ENCODE measurements at regions of chr14 and their contacts with region 1.

Region 1: GRCh38 chr14:100375963-100376735 is 53.0 kb downstream of the SLC25A47 start:
- DNase-seq: peak; percentile 93
- ATAC-seq: peak; percentile 81
- H3K4me3 Mint-ChIP-seq: peak within 1 kb of the TSS; percentile 95
- H3K27ac Mint-ChIP-seq: peak within 1 kb of the TSS; percentile 95
- H3K4me1 Mint-ChIP-seq: peaks cover 48% of the 10 kb centered on the region
- H3K27me3 Mint-ChIP-seq: no peaks in the 10 kb centered on the region
- CTCF ChIP-seq: no peak

Region 2: GRCh38 chr14:99604283-99604765 is 771.8 kb before region 1 on chr14:
- CTCF ChIA-PET with region 1: no interaction called
- POLR2A ChIA-PET with region 1: no interaction called
- intact Hi-C with region 1: loop called (anchors 10 kb)
- DNase-seq: peak; percentile 96
- ATAC-seq: peak; percentile 94
- H3K4me3 Mint-ChIP-seq: peak overlapping the region; percentile 88
- H3K27ac Mint-ChIP-seq: peak overlapping the region; percentile 71
- H3K4me1 Mint-ChIP-seq: peaks cover 9% of the 10 kb centered on the region
- H3K27me3 Mint-ChIP-seq: no peaks in the 10 kb centered on the region
- CTCF ChIP-seq: no peak

Region 3: DNA sequence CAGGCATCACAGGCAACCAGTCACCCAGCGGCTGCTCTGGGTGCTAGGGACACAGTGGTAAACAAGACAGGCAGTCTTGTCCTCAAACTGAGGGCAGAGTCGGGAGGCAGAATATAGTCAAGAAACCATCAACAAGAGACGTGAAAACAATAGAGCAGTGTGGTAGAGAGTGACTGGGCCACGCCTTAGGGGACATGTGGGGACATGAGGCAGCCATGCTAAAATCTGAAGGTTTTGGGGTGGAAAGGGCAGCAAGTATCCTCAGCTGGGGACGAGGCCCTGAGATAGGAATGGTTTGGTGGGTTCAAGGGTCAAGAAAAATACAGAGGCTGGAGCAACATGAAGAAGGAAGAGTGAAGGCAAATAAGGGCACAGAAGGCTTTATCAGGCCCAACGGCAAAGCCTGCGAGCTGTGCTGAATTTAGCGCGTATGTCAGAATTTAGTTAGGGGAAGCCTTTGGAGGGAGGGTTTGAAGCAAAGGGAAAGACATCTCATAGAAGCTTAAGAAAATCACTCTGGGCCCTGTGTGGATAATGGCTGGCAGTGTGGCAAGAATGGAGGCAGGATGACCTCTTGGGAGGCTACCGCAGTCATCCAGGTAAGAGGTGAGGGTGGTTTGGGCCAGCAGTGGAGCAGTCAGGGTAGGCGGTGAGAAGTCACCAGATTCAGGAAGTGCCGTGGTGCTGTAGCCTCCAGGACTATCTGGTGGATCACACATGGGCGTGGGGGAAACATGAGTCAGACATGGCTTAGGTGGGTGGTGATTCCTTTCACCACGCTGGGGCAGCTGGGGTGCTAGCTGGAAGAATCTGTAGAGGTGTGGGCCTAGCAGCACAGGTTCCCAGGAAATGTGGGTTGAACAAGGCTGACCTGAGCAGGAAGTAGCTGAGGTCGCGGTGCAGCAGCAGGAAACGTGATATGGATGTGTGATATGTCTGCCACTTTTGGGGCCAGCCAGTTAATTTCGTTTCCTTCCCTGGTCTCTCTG is 307.9 kb before region 1 on chr14:
- CTCF ChIA-PET with region 1: no interaction called
- POLR2A ChIA-PET with region 1: interaction called, 4 read pairs
- intact Hi-C with region 1: loop called (anchors 2 kb)
- DNase-seq: peak; percentile 60
- ATAC-seq: peak; percentile 47
- H3K4me3 Mint-ChIP-seq: peak overlapping the region; percentile 94
- H3K27ac Mint-ChIP-seq: peak overlapping the region; percentile 98
- H3K4me1 Mint-ChIP-seq: peaks cover 95% of the 10 kb centered on the region
- H3K27me3 Mint-ChIP-seq: no peaks in the 10 kb centered on the region
- CTCF ChIP-seq: no peak

Region 4: GRCh38 chr14:100155042-100155846 is 220.9 kb before region 1 on chr14:
- CTCF ChIA-PET with region 1: no interaction called
- POLR2A ChIA-PET with region 1: no interaction called
- intact Hi-C with region 1: loop called (anchors 2 kb)
- DNase-seq: no peak
- ATAC-seq: no peak
- H3K4me3 Mint-ChIP-seq: no peak overlapping the region
- H3K27ac Mint-ChIP-seq: no peak overlapping the region
- H3K4me1 Mint-ChIP-seq: peaks cover 31% of the 10 kb centered on the region
- H3K27me3 Mint-ChIP-seq: no peaks in the 10 kb centered on the region
- CTCF ChIP-seq: no peak

Region 5: DNA sequence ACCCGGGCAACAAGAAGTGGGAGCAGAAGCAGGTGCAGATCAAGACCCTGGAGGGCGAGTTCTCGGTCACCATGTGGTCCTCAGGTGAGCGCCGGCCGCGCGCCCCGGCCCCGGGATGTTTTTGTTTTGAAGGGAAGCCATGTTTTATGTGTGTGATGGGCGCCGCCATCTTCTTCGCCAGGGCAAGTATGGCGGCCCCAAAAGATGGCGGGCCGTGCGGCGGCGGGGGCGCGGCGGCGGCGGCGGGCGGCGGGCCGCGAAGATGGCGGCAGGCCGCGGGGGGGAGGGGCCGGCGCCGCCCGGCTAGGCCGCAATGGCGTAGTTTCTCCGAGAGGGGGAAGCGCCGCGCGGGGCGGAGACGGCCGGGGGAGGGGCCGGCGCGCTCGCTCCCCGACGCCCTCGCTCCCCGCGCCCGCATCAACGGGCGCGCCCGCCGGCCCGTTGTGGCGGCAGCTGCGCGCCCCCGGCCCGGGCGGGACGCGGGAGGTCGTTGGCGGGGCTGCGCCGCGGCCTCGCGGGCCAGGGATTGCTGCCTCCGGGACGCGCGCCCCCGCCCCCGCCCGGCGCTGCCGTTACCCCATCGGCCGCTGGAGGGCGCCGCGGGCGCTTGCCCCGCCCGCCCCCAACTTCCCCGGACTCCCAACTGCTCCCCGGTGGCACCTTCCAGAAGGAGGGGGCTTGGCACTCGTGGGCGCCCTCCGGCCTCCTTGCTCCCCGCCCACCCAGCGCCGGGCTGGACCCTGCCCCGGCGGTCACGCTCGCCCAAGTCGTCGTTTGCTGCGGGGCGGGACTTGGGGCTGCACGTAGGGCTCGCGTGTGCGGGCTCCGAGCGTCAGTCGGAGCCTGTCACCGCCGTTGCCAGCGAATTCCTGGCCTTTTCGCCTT is 136.1 kb before region 1 on chr14:
- CTCF ChIA-PET with region 1: interaction called, 4 read pairs
- POLR2A ChIA-PET with region 1: interaction called, 5 read pairs
- intact Hi-C with region 1: loop called (anchors 1 kb)
- DNase-seq: peak; percentile 86
- ATAC-seq: peak; percentile 48
- H3K4me3 Mint-ChIP-seq: peak overlapping the region; percentile 87
- H3K27ac Mint-ChIP-seq: peak overlapping the region; percentile 90
- H3K4me1 Mint-ChIP-seq: peaks cover 61% of the 10 kb centered on the region
- H3K27me3 Mint-ChIP-seq: no peaks in the 10 kb centered on the region
- CTCF ChIP-seq: no peak

Region 6: DNA sequence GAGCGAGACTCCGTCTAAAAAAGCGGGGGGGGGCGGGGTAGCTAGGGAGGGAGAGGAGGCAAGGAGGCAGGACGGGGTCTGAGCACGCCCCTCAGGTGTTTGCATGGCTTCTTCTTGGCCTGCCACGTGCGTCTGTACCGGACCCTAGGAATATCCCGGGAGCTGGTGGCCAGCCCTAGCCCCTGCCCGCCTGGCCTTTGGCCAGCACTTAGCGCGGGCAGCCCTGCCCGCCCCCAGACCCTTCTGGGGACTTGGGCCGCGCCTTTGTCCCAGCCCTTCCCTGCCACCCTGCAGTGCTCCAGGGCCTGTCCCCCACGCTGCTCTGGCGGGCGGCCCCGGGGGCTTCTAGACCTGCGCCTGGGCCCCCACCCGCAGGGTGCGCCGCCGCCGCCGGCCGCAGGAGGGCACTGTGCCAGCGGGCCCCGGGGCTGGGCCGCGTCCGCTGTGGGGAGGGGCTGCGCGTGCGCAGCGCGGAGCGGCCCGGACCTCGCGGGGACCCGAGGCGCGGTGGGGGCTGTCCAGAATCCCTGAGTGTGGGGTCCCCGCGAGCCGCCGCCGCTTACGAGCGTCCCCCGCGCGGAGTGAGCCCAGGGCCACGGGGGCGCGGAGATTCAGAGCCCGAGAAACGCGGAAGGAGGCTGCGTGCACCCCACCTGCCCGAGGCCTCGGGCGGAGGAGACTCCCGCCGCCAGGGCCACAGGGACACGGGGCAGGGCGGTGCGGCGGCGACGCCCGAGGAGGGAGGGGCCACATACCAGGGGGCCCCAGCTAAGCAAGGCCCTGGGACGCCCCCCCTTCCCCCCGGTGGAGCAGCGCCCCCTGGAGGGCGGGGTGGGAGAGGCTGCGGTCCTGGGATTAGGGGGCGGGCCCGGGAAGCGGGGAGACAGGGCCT is 90.9 kb before region 1 on chr14:
- CTCF ChIA-PET with region 1: interaction called, 18 read pairs
- POLR2A ChIA-PET with region 1: interaction called, 9 read pairs
- intact Hi-C with region 1: loop called (anchors 1 kb)
- DNase-seq: peak; percentile 92
- ATAC-seq: peak; percentile 93
- H3K4me3 Mint-ChIP-seq: peak overlapping the region; percentile 82
- H3K27ac Mint-ChIP-seq: peak overlapping the region; percentile 85
- H3K4me1 Mint-ChIP-seq: peaks cover 10% of the 10 kb centered on the region
- H3K27me3 Mint-ChIP-seq: no peaks in the 10 kb centered on the region
- CTCF ChIP-seq: peak; percentile 71

Region 7: DNA sequence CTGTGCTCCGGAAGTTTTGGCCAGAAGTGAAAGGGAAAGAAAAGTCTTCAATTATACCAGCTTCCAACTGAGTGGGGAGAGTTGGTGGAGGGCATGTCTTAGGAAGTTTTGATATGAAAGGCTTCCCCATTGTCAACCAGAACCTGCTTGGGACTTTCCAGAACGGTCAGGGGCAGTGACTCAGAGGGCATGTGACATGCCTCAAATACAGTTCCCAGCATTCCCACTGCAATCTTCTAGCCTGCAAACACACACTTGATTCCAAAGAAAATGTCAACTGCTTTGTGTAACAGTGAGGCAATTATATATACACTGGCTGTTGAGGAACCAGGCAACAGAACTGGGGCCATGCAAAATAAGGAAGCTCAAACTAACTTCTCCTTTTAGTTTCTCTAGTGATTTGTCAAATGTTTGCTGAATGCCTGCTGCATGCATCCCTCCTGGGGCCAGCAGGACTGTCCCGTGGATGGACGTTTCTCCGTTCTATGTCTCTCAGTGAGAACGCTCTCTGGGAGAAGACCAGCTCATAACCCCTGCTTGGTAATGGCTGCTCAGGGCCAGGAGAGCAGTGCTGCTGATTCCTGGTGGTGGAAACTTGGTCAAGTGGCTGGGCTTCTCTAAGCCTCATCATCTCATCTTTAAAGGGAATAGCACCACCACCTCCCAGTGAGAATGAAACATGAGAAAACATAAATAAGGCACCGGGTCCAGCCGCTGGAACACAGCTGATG is 34.7 kb before region 1 on chr14:
- CTCF ChIA-PET with region 1: interaction called, 5 read pairs
- POLR2A ChIA-PET with region 1: interaction called, 6 read pairs
- intact Hi-C with region 1: loop called (anchors 1 kb)
- DNase-seq: no peak
- ATAC-seq: peak; percentile 93
- H3K4me3 Mint-ChIP-seq: peak overlapping the region; percentile 41
- H3K27ac Mint-ChIP-seq: peak overlapping the region; percentile 92
- H3K4me1 Mint-ChIP-seq: peaks cover 32% of the 10 kb centered on the region
- H3K27me3 Mint-ChIP-seq: no peaks in the 10 kb centered on the region
- CTCF ChIP-seq: no peak

Measured in activated B cell treated with CpG ODN at 0.5 μM for 24 hours (primary cell).